Testis (tissue), 5 donors: ENCODE measurements at regions of chr12 and their contacts with region 1.

Region 1: GRCh38 chr12:6062757-6063735 is 61.4 kb downstream of the VWF start:
- DNase-seq: peak; percentile 58
- H3K4me3 ChIP-seq: no peak overlapping the region
- H3K27ac ChIP-seq: no peak overlapping the region
- H3K4me1 ChIP-seq: no peaks in the 10 kb centered on the region
- H3K27me3 ChIP-seq: no peaks in the 10 kb centered on the region
- CTCF ChIP-seq: peak; percentile 60 to 79 (median 68)
- POLR2A ChIP-seq: no peak

Region 2: GRCh38 chr12:6195665-6196535 is 132.9 kb after region 1 on chr12:
- intact Hi-C with region 1: loop called (anchors 10 kb)
- DNase-seq: peak; percentile 92
- H3K4me3 ChIP-seq: no peak overlapping the region
- H3K27ac ChIP-seq: no peak overlapping the region
- H3K4me1 ChIP-seq: peaks cover 3% of the 10 kb centered on the region
- H3K27me3 ChIP-seq: no peaks in the 10 kb centered on the region
- CTCF ChIP-seq: peak; percentile 93 to 97 (median 95)
- POLR2A ChIP-seq: no peak